H1 (cell line): ENCODE measurements at regions of chr10 and their contacts with region 1.

Region 1: GRCh38 chr10:96416643-96417042 is 57.8 kb upstream of the OPALIN start:
- DNase-seq: peak in 1 of 2 experiments; percentile 27
- H3K4me3 ChIP-seq: no peak overlapping the region
- H3K27ac ChIP-seq: no peak overlapping the region
- H3K4me1 ChIP-seq: no peaks in the 10 kb centered on the region
- H3K27me3 ChIP-seq: no peaks in the 10 kb centered on the region
- CTCF ChIP-seq: no peak
- EP300 ChIP-seq: no peak
- POLR2A ChIP-seq: no peak
- RAD21 ChIP-seq: no peak

Region 2: GRCh38 chr10:96496281-96496925 is 79.8 kb after region 1 on chr10:
- CTCF ChIA-PET with region 1: interaction called, 31 read pairs
- POLR2A ChIA-PET with region 1: no interaction called
- DNase-seq: peak in 1 of 2 experiments; percentile 61
- H3K4me3 ChIP-seq: no peak overlapping the region
- H3K27ac ChIP-seq: no peak overlapping the region
- H3K4me1 ChIP-seq: peaks cover 0 to 3% (median 0%) of the 10 kb centered on the region in 4 experiments; a peak in 1 of 7 replicates
- H3K27me3 ChIP-seq: no peaks in the 10 kb centered on the region
- CTCF ChIP-seq: no peak
- EP300 ChIP-seq: no peak
- POLR2A ChIP-seq: no peak
- RAD21 ChIP-seq: no peak

Region 3: GRCh38 chr10:96501985-96502384 is 85.3 kb after region 1 on chr10:
- CTCF ChIA-PET with region 1: interaction called, 15 read pairs
- POLR2A ChIA-PET with region 1: interaction called, 3 read pairs
- DNase-seq: no peak
- H3K4me3 ChIP-seq: no peak overlapping the region
- H3K27ac ChIP-seq: no peak overlapping the region
- H3K4me1 ChIP-seq: 0 out of 7 replicates have a peak, but pooled peaks cover 0 to 3% (median 0%) of the 10 kb centered on the region in 4 experiments
- H3K27me3 ChIP-seq: no peaks in the 10 kb centered on the region; a peak in 1 of 7 replicates
- CTCF ChIP-seq: no peak
- EP300 ChIP-seq: no peak
- POLR2A ChIP-seq: no peak
- RAD21 ChIP-seq: no peak